ENCODE measurements at regions of chr9 and their contacts with region 1.

Region 1: DNA sequence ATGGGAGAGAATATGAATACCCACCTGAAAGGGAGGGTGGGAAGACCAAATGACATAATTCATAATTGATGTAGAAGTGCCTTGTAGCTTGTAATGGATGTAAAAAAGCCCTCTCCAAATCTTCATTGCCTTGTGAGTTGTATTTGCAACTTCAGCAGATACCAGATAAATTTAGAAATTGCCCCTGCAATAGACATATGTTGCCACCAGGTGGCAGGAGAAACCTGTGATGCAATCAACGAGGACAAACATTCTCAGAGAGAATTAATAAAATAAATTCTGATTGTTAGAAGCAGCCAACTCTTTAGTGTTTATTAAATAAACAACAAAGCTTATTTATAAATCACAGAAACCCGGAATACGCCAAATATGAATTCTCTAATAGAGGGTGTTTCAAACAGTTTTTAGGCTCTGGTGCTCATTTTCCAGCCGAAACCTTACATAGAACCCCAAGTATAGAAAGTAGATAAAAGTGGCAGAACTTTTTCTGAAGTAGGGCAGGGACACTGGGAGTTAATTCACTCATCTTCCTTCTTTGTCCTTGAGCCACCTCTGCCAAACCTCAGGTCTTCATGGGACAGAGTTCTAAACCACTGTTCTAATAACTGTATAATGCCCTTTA is 147.8 kb downstream of the TMEM38B start:
- DNase-seq: peak in 4 of 14 experiments; percentile 13 to 31 (median 25)
- ATAC-seq: no peak
- H3K4me3 ChIP-seq: no peak overlapping the region
- H3K4me3 Mint-ChIP-seq: no peak overlapping the region
- H3K27ac ChIP-seq: no peak overlapping the region
- H3K27ac Mint-ChIP-seq: no peak overlapping the region
- H3K4me1 ChIP-seq: no peaks in the 10 kb centered on the region
- H3K4me1 Mint-ChIP-seq: no peaks in the 10 kb centered on the region
- H3K27me3 ChIP-seq: no peaks in the 10 kb centered on the region
- H3K27me3 Mint-ChIP-seq: no peaks in the 10 kb centered on the region
- CTCF ChIP-seq: peak; percentile 74

Region 2: GRCh38 chr9:105881654-105882349 is 39.7 kb after region 1 on chr9:
- CTCF ChIA-PET with region 1: interaction called, 5 read pairs
- POLR2A ChIA-PET with region 1: no interaction called
- intact Hi-C with region 1: loop called (anchors 1 to 5 kb)
- DNase-seq: peak; percentile 29 to 72 (median 52)
- ATAC-seq: peak; percentile 48
- H3K4me3 ChIP-seq: no peak overlapping the region
- H3K4me3 Mint-ChIP-seq: no peak overlapping the region
- H3K27ac ChIP-seq: no peak overlapping the region
- H3K27ac Mint-ChIP-seq: no peak overlapping the region
- H3K4me1 ChIP-seq: no peaks in the 10 kb centered on the region
- H3K4me1 Mint-ChIP-seq: no peaks in the 10 kb centered on the region
- H3K27me3 ChIP-seq: no peaks in the 10 kb centered on the region
- H3K27me3 Mint-ChIP-seq: peaks cover 5% of the 10 kb centered on the region
- CTCF ChIP-seq: peak; percentile 89

Region 3: GRCh38 chr9:107172160-107172978 is 1330.2 kb after region 1 on chr9:
- CTCF ChIA-PET with region 1: no interaction called
- POLR2A ChIA-PET with region 1: no interaction called
- intact Hi-C with region 1: loop called in 1 of 2 experiments (anchors 2 kb)
- DNase-seq: peak; percentile 15 to 68 (median 38)
- ATAC-seq: peak; percentile 59
- H3K4me3 ChIP-seq: no peak overlapping the region
- H3K4me3 Mint-ChIP-seq: no peak overlapping the region
- H3K27ac ChIP-seq: no peak overlapping the region
- H3K27ac Mint-ChIP-seq: no peak overlapping the region
- H3K4me1 ChIP-seq: no peaks in the 10 kb centered on the region
- H3K4me1 Mint-ChIP-seq: no peaks in the 10 kb centered on the region
- H3K27me3 ChIP-seq: no peaks in the 10 kb centered on the region
- H3K27me3 Mint-ChIP-seq: peaks cover 8% of the 10 kb centered on the region
- CTCF ChIP-seq: peak; percentile 76

Measured in CD4-positive, alpha-beta T cell (primary cell).